Caco-2 (cell line): ENCODE measurements at regions of chr17 and their contacts with region 1.

Region 1: DNA sequence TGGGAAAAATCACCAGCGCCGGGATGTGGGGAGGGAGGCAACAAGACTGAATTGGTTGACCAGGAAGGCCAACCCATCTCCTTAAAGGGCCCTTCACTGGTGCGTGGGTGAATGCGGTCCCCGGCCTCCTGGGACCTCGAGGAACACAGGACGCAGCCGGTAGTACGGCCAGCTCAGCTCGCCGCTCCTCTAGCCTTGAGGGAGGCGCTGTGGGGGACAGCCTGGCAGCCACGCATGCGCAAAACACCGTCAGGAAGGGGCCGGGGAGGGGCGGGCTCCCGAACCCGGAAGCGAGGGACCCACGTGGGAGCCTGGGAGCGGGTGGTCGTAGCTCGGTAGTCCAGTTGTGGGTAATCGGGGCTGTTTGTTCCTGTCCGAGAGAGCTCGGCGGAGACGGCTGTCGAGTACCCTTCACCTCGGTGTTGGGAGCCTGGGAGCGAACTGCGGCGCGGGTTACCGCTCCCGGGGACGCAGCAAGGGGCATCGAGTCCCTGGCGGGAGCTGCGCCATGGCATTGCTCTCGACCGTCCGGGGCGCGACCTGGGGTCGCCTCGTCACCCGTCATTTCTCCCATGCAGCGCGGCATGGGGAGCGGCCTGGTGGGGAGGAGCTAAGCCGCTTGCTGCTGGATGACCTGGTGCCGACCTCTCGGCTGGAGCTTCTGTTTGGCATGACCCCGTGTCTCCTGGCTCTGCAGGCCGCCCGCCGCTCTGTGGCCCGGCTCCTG is at the start of gene MRM1:
- DNase-seq: peak; percentile 95 to 97
- H3K4me3 ChIP-seq: peak within 1 kb of the TSS; percentile 66
- H3K4me3 Mint-ChIP-seq: peak within 1 kb of the TSS; percentile 88
- H3K27ac Mint-ChIP-seq: peak within 1 kb of the TSS; percentile 97
- H3K4me1 ChIP-seq: peaks cover 10% of the 10 kb centered on the region
- H3K4me1 Mint-ChIP-seq: peaks cover 27% of the 10 kb centered on the region
- H3K27me3 ChIP-seq: no peaks in the 10 kb centered on the region
- H3K27me3 Mint-ChIP-seq: no peaks in the 10 kb centered on the region
- CTCF ChIP-seq: peak in 1 of 2 experiments; percentile 36
- total RNA-seq, gene MRM1: 9.3 and 13.5 TPM in 2 replicates

Region 2: GRCh38 chr17:36545465-36546417 is 55.7 kb before region 1 on chr17:
- CTCF ChIA-PET with region 1: no interaction called
- POLR2A ChIA-PET with region 1: interaction called, 17 read pairs
- intact Hi-C with region 1: no loop called
- DNase-seq: peak; percentile 99
- H3K4me3 ChIP-seq: peak overlapping the region; percentile 51
- H3K4me3 Mint-ChIP-seq: peak overlapping the region; percentile 92
- H3K27ac Mint-ChIP-seq: peak overlapping the region; percentile 97
- H3K4me1 ChIP-seq: peaks cover 23% of the 10 kb centered on the region
- H3K4me1 Mint-ChIP-seq: peaks cover 13% of the 10 kb centered on the region
- H3K27me3 ChIP-seq: no peaks in the 10 kb centered on the region
- H3K27me3 Mint-ChIP-seq: no peaks in the 10 kb centered on the region
- CTCF ChIP-seq: no peak

Region 3: GRCh38 chr17:36653856-36654255 is 52.4 kb after region 1 on chr17:
- CTCF ChIA-PET with region 1: no interaction called
- POLR2A ChIA-PET with region 1: no interaction called
- intact Hi-C with region 1: no loop called
- DNase-seq: no peak
- H3K4me3 ChIP-seq: no peak overlapping the region
- H3K4me3 Mint-ChIP-seq: no peak overlapping the region
- H3K27ac Mint-ChIP-seq: no peak overlapping the region
- H3K4me1 ChIP-seq: no peaks in the 10 kb centered on the region
- H3K4me1 Mint-ChIP-seq: no peaks in the 10 kb centered on the region
- H3K27me3 ChIP-seq: peaks cover 3% of the 10 kb centered on the region; the same call in 1 of the 2 replicates
- H3K27me3 Mint-ChIP-seq: peaks cover 12% of the 10 kb centered on the region
- CTCF ChIP-seq: no peak

Region 4: GRCh38 chr17:36755586-36755985 is 154.1 kb after region 1 on chr17:
- CTCF ChIA-PET with region 1: interaction called, 10 read pairs
- POLR2A ChIA-PET with region 1: no interaction called
- intact Hi-C with region 1: no loop called
- DNase-seq: peak in 1 of 2 experiments; percentile 46
- H3K4me3 ChIP-seq: no peak overlapping the region
- H3K4me3 Mint-ChIP-seq: no peak overlapping the region
- H3K27ac Mint-ChIP-seq: no peak overlapping the region
- H3K4me1 ChIP-seq: no peaks in the 10 kb centered on the region
- H3K4me1 Mint-ChIP-seq: no peaks in the 10 kb centered on the region
- H3K27me3 ChIP-seq: no peaks in the 10 kb centered on the region; the same call in 1 of the 2 replicates
- H3K27me3 Mint-ChIP-seq: peaks cover 9% of the 10 kb centered on the region
- CTCF ChIP-seq: peak; percentile 22 to 47